ENCODE measurements at regions of chr13 and their contacts with region 1.

Region 1: GRCh38 chr13:109786457-109787134 is at the start of gene IRS2:
- DNase-seq: peak; percentile 96 to 98 (median 97)
- H3K4me3 ChIP-seq: peak within 1 kb of the TSS; percentile 64 to 93 (median 73)
- H3K4me3 Mint-ChIP-seq: peak within 1 kb of the TSS; percentile 87 to 93
- H3K27ac ChIP-seq: peak within 1 kb of the TSS; percentile 40 to 78
- H3K27ac Mint-ChIP-seq: peak within 1 kb of the TSS in 6 of 7 donors; percentile 77 to 91 (median 84)
- H3K4me1 ChIP-seq: peaks cover 39 to 73% of the 10 kb centered on the region in 2 donors
- H3K4me1 Mint-ChIP-seq: peaks cover 39% of the 10 kb centered on the region
- H3K27me3 ChIP-seq: no peaks in the 10 kb centered on the region
- H3K27me3 Mint-ChIP-seq: no peaks in the 10 kb centered on the region
- CTCF ChIP-seq: no peak
- polyA plus RNA-seq, gene IRS2: 2.4 to 27.1 (median 3.5) TPM

Region 2: GRCh38 chr13:108961542-108962125 is 825.0 kb before region 1 on chr13:
- intact Hi-C with region 1: loop called in 1 of 2 experiments (anchors 10 kb)
- DNase-seq: peak; percentile 38 to 82 (median 69)
- H3K4me3 ChIP-seq: no peak overlapping the region
- H3K4me3 Mint-ChIP-seq: no peak overlapping the region
- H3K27ac ChIP-seq: no peak overlapping the region
- H3K27ac Mint-ChIP-seq: no peak overlapping the region
- H3K4me1 ChIP-seq: no peaks in the 10 kb centered on the region
- H3K4me1 Mint-ChIP-seq: peaks cover 4% of the 10 kb centered on the region
- H3K27me3 ChIP-seq: no peaks in the 10 kb centered on the region
- H3K27me3 Mint-ChIP-seq: peaks cover 0 to 2% (median 1%) of the 10 kb centered on the region in 3 donors
- CTCF ChIP-seq: peak; percentile 88

Region 3: GRCh38 chr13:109162248-109163053 is 624.1 kb before region 1 on chr13:
- intact Hi-C with region 1: loop called in 1 of 2 experiments (anchors 10 kb)
- DNase-seq: peak; percentile 70 to 91 (median 84)
- H3K4me3 ChIP-seq: no peak overlapping the region
- H3K4me3 Mint-ChIP-seq: peak overlapping the region in 1 of 2 donors; percentile 31
- H3K27ac ChIP-seq: no peak overlapping the region
- H3K27ac Mint-ChIP-seq: peak overlapping the region in 2 of 7 donors; percentile 3 to 25
- H3K4me1 ChIP-seq: peaks cover 13 to 14% of the 10 kb centered on the region in 2 donors
- H3K4me1 Mint-ChIP-seq: peaks cover 22% of the 10 kb centered on the region
- H3K27me3 ChIP-seq: no peaks in the 10 kb centered on the region
- H3K27me3 Mint-ChIP-seq: peaks cover 5 to 9% (median 5%) of the 10 kb centered on the region in 3 donors
- CTCF ChIP-seq: no peak

Region 4: GRCh38 chr13:109654341-109655205 is 132.0 kb before region 1 on chr13:
- intact Hi-C with region 1: loop called in 1 of 2 experiments (anchors 5 kb)
- DNase-seq: peak; percentile 88 to 98 (median 93)
- H3K4me3 ChIP-seq: peak overlapping the region in 1 of 3 experiments; percentile 63
- H3K4me3 Mint-ChIP-seq: peak overlapping the region; percentile 21 to 82
- H3K27ac ChIP-seq: peak overlapping the region; percentile 87 to 91
- H3K27ac Mint-ChIP-seq: peak overlapping the region; percentile 93 to 100 (median 98)
- H3K4me1 ChIP-seq: peaks cover 68 to 79% of the 10 kb centered on the region in 2 donors
- H3K4me1 Mint-ChIP-seq: peaks cover 69% of the 10 kb centered on the region
- H3K27me3 ChIP-seq: no peaks in the 10 kb centered on the region
- H3K27me3 Mint-ChIP-seq: peaks cover 0 to 2% (median 2%) of the 10 kb centered on the region in 3 donors
- CTCF ChIP-seq: no peak

Region 5: GRCh38 chr13:109715902-109716301 is 70.7 kb before region 1 on chr13:
- intact Hi-C with region 1: loop called (anchors 5 to 10 kb)
- DNase-seq: peak; percentile 83 to 91 (median 91)
- H3K4me3 ChIP-seq: no peak overlapping the region
- H3K4me3 Mint-ChIP-seq: no peak overlapping the region
- H3K27ac ChIP-seq: peak overlapping the region in 1 of 2 donors; percentile 45
- H3K27ac Mint-ChIP-seq: peak overlapping the region; percentile 38 to 85 (median 81)
- H3K4me1 ChIP-seq: peaks cover 14 to 19% of the 10 kb centered on the region in 2 donors
- H3K4me1 Mint-ChIP-seq: peaks cover 34% of the 10 kb centered on the region
- H3K27me3 ChIP-seq: no peaks in the 10 kb centered on the region
- H3K27me3 Mint-ChIP-seq: no peaks in the 10 kb centered on the region
- CTCF ChIP-seq: peak; percentile 3

Region 6: GRCh38 chr13:110116072-110116487 is 329.5 kb after region 1 on chr13:
- intact Hi-C with region 1: loop called in 1 of 2 experiments (anchors 10 kb)
- DNase-seq: peak; percentile 41 to 65 (median 64)
- H3K4me3 ChIP-seq: peak overlapping the region in 1 of 3 experiments; percentile 31
- H3K4me3 Mint-ChIP-seq: peak overlapping the region; percentile 31 to 86
- H3K27ac ChIP-seq: no peak overlapping the region
- H3K27ac Mint-ChIP-seq: no peak overlapping the region
- H3K4me1 ChIP-seq: peaks cover 12 to 21% of the 10 kb centered on the region in 2 donors
- H3K4me1 Mint-ChIP-seq: peaks cover 15% of the 10 kb centered on the region
- H3K27me3 ChIP-seq: peaks cover 0 to 2% of the 10 kb centered on the region in 2 donors
- H3K27me3 Mint-ChIP-seq: peaks cover 14 to 22% (median 20%) of the 10 kb centered on the region in 3 donors
- CTCF ChIP-seq: peak; percentile 85